Dorsolateral prefrontal cortex (tissue), 120 donors: ENCODE measurements at regions of chr17 and their contacts with region 1.

Region 1: GRCh38 chr17:29617125-29617480 is 5.6 kb downstream of the CORO6 start:
- DNase-seq: peak in 9 of 10 donors; percentile 78 to 94 (median 90)
- H3K4me3 ChIP-seq: peak overlapping the region; percentile 23 to 73 (median 54)
- H3K27ac ChIP-seq: peak overlapping the region in 51 of 59 donors; percentile 14 to 96 (median 76)
- H3K27me3 ChIP-seq: no peaks in the 10 kb centered on the region
- CTCF ChIP-seq: peak in 55 of 56 donors; percentile 45 to 85 (median 69)

Region 2: DNA sequence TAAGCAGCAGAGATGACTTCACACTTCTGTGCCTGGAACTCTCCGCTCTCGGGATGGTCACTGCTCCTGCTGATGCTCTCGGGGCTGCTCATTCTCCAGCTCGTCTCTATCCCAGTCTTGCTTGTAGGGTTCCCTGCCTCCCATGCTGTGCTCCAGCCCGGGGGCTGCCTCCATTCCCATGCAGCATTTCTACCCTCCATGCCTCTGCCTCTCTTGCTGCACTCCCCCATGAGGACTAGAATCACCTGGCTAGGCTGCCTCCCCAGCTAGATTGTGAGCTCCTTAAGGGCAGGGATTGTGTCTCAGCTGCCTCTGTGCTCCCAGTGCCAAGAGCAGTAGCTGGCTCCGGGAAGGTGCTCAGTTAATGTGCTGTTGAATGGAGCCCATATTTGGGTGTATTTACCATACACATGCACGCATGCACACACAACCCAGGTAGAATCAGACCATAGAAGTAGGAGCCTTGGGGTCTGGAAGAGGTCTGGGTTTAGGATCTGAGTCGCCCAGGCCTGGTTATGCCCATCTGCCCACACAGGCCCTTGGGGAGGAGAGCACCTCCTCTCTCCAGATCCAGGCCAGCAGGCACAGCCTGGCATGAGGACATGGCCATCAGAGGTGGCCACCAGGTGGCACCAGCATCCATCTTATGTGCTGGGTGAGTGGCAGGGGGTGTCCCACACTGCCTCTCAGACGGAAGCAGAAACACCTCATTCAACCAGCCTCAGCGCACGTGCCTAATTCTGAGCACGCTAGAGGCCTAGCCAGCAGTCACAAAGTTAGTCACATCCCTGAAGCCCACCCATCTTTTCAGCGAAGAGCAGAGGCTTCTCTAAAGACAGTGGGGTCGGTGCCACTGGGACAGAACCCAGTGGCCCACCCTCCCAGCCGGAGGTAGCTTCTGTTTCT is 37.0 kb before region 1 on chr17:
- intact Hi-C with region 1: loop called (anchors 2 to 5 kb)
- DNase-seq: peak; percentile 90 to 94 (median 92)
- H3K4me3 ChIP-seq: peak overlapping the region in 3 of 59 donors; percentile 8 to 27 (median 15)
- H3K27ac ChIP-seq: peak overlapping the region in 58 of 59 donors; percentile 15 to 99 (median 95)
- H3K27me3 ChIP-seq: no peaks in the 10 kb centered on the region
- CTCF ChIP-seq: peak; percentile 71 to 99 (median 97)

Region 3: GRCh38 chr17:29589524-29590410 is 27.3 kb before region 1 on chr17 and contains the start of gene GIT1:
- intact Hi-C with region 1: loop called in 1 of 2 experiments (anchors 2 kb)
- DNase-seq: peak; percentile 70 to 91 (median 86)
- H3K4me3 ChIP-seq: peak within 1 kb of the TSS; percentile 55 to 95 (median 85)
- H3K27ac ChIP-seq: peak within 1 kb of the TSS; percentile 76 to 99 (median 95)
- H3K27me3 ChIP-seq: no peaks in the 10 kb centered on the region
- CTCF ChIP-seq: peak in 30 of 56 donors; percentile 6 to 67 (median 28)
- total RNA-seq, gene GIT1: 110 to 287 (median 170) TPM

Region 4: DNA sequence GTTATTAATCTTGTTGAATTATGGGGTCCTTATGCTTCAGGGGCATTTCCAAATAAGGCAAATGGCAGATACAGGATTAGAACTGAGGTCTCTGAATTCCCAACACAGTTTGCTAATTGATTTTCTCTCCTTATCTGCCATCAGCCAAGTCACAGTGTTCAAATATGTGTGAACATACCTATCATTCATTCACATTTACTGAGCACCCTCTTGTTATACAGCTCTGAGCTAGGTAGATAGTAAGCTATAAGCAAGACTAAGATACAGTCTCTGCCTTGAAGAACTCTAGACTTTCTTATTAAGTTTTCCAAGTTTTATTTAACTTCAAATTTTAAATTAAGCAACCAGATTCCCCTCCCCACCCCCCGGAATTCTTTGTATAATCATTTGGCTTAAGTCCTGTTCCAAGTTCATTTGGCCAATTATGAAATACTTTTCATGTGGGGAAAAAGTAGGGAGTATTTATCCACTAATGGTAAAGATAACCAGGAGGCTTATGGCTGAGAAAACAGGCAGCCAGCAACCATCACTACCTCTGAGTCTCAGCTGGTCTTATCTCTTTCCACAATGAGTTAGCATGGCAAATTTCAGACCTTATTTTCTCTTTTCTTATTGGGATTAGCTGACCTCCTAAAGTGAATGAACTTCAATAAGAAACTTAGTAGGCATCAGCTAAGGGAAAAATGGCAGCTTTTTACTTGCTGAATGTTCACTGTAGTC is 37.1 kb after region 1 on chr17:
- intact Hi-C with region 1: no loop called
- DNase-seq: no peak
- H3K4me3 ChIP-seq: no peak overlapping the region
- H3K27ac ChIP-seq: peak overlapping the region in 3 of 59 donors; percentile 6 to 26 (median 8)
- H3K27me3 ChIP-seq: no peaks in the 10 kb centered on the region
- CTCF ChIP-seq: no peak

Region 5: DNA sequence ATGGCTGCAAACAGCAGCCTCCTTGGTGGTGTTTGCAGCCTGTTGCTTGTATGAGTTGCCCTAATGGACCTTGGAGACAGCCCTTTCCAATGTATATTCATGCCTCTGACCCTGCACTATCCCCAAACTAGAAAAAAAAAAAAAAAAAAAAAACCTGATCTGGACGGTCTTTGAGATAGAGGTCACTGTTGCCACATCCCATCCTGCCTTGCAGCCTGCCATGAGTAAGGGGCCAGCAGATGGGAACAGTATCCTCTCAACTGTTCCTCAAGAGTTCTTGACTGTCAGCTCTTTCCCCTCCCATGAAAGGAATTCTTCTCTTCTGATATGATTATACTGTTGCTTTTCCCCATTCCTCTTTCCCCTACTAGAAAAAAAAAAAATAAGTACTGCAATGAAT is 160.6 kb after region 1 on chr17:
- intact Hi-C with region 1: loop called in 1 of 2 experiments (anchors 5 kb)
- DNase-seq: no peak
- H3K4me3 ChIP-seq: no peak overlapping the region
- H3K27ac ChIP-seq: peak overlapping the region in 5 of 59 donors; percentile 13 to 53 (median 24)
- H3K27me3 ChIP-seq: no peaks in the 10 kb centered on the region
- CTCF ChIP-seq: no peak